ENCODE measurements at regions of chrX and their contacts with region 1.

Region 1: DNA sequence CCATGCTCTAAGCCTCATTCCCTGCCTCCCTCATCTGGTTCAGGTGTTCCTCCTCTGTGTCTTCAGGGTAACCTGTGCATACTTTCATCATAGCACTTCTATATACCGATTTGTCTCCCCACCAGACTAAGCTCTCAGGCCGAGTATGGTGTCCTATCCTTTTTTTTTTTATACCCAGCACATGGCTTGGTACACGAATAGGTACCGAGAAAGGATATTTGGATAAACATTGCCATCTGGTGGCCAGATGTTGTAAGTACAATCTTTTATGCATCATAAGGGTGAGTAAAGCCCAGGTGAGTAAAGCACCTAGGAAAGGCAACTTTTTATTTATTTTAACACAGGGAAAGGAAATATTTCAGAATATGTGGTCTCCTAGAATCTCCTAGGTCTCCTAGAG is 68.4 kb downstream of the MID2 start:
- DNase-seq: peak in 1 of 2 donors; percentile 5
- ATAC-seq: peak in 5 of 8 donors; percentile 46 to 71 (median 52)
- H3K4me3 ChIP-seq: no peak overlapping the region
- H3K27ac ChIP-seq: no peak overlapping the region
- H3K4me1 ChIP-seq: no peaks in the 10 kb centered on the region
- H3K27me3 ChIP-seq: peaks cover 0 to 22% (median 0%) of the 10 kb centered on the region in 7 donors
- CTCF ChIP-seq: peak; percentile 26 to 68 (median 62)

Region 2: GRCh38 chrX:106894392-106894909 is 999.6 kb before region 1 on chrX:
- intact Hi-C with region 1: loop called in 1 of 10 experiments (anchors 10 kb)
- DNase-seq: peak; percentile 13 to 21
- ATAC-seq: peak; percentile 42 to 89 (median 80)
- H3K4me3 ChIP-seq: no peak overlapping the region
- H3K27ac ChIP-seq: no peak overlapping the region
- H3K4me1 ChIP-seq: peaks cover 0 to 5% (median 0%) of the 10 kb centered on the region in 9 donors
- H3K27me3 ChIP-seq: peaks cover 0 to 55% (median 0%) of the 10 kb centered on the region in 7 donors
- CTCF ChIP-seq: peak; percentile 48 to 89 (median 72)

Region 3: GRCh38 chrX:107537815-107538214 is 356.2 kb before region 1 on chrX:
- intact Hi-C with region 1: loop called in 1 of 10 experiments (anchors 10 kb)
- DNase-seq: peak in 1 of 2 donors; percentile 10
- ATAC-seq: no peak
- H3K4me3 ChIP-seq: no peak overlapping the region
- H3K27ac ChIP-seq: no peak overlapping the region
- H3K4me1 ChIP-seq: no peaks in the 10 kb centered on the region
- H3K27me3 ChIP-seq: peaks cover 0 to 52% (median 0%) of the 10 kb centered on the region in 7 donors
- CTCF ChIP-seq: peak in 7 of 9 donors; percentile 35 to 57 (median 39)

Region 4: DNA sequence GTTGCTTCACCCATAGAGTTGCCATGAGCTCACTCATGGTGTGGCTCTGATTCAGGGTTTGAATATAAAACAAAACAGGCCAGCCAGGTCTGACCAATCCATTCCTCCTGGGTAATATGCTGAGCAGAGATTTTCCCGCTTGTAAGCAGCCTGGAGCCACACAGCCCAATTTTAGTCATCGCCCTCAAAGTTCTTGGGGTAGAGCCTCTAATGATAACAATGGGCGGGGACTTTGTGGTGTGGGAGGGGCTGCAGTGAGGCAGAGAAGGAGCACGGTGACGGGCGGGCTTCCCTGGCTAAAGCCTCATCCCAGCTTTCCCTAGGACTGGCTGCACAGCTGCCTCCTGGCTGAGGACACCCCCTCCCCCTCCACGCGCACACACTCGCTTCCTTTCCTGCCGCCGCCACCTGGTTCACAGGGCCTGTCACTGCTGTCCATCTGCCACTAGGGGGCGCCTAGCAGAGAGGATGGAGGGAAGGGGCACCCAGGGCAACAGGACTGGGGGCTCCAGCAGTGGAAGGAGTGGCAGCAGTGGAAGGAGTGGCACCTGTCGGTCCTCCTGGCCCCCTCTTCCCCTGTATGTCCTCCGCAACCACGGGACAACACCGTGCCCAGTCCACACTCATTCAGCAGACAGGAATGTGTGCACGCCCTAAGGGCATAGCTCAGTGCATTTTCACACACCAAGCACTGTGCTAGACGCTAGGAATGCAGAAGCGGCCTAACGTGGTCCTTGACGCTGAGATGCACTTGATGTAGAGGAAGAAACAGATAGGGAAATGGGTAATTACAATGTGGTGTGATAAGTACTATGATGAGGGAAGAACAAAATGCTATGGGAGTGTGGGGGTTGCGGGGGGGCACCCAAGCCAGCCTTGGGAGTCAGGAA is 238.9 kb before region 1 on chrX:
- intact Hi-C with region 1: loop called in 9 of 10 experiments (anchors 5 to 10 kb)
- DNase-seq: peak; percentile 50 to 53
- ATAC-seq: peak; percentile 66 to 91 (median 80)
- H3K4me3 ChIP-seq: peak overlapping the region in 1 of 10 donors; percentile 18
- H3K27ac ChIP-seq: peak overlapping the region in 3 of 10 donors; percentile 6 to 41 (median 15)
- H3K4me1 ChIP-seq: peaks cover 0 to 20% (median 0%) of the 10 kb centered on the region in 9 donors
- H3K27me3 ChIP-seq: peaks cover 0 to 30% (median 0%) of the 10 kb centered on the region in 7 donors
- CTCF ChIP-seq: peak; percentile 18 to 79 (median 66)

Region 5: DNA sequence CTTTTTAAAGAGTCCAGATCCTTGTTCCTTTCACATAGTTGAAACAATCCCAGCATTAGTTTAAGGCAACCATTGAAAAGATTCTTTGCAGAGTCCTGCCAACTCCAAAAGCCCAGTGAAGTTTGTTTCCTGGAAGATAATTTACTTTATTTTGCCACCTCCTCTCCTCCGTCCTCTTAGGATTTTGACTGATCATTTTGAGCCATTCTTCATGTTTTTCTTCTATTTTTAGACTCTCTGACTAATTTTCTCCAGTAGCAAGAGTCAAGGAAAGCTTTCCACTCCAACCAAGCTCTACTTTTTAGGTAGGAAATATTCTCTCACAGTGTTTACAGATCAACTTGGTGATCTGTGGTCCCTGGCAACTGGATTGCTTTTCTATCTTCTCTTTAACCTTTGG is 106.2 kb before region 1 on chrX:
- intact Hi-C with region 1: loop called in 1 of 10 experiments (anchors 10 kb)
- DNase-seq: no peak
- ATAC-seq: peak in 1 of 8 donors; percentile 16
- H3K4me3 ChIP-seq: no peak overlapping the region
- H3K27ac ChIP-seq: no peak overlapping the region
- H3K4me1 ChIP-seq: peaks cover 0 to 5% (median 0%) of the 10 kb centered on the region in 9 donors
- H3K27me3 ChIP-seq: peaks cover 0 to 68% (median 0%) of the 10 kb centered on the region in 7 donors
- CTCF ChIP-seq: no peak

Region 6: DNA sequence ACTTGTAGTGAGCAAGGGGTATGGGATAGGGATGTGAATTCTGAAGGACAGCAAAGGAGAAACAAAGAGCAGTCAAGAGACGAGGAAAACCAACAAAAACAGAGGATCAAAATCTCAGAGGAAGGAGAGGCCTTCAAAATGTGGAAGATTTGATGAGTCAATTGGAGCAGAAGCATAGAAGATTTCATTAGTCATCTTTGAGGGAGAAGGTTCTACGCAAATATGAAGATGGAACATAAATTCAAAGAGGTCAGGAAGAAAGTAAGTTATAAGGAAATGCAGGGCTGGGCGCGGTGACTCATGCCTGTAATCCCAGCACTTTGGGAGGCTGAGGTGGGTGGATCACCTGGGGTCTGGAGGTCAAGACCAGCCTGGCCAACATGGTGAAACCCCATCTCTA is 33.0 kb before region 1 on chrX:
- intact Hi-C with region 1: no loop called
- DNase-seq: no peak
- ATAC-seq: no peak
- H3K4me3 ChIP-seq: no peak overlapping the region
- H3K27ac ChIP-seq: no peak overlapping the region
- H3K4me1 ChIP-seq: no peaks in the 10 kb centered on the region
- H3K27me3 ChIP-seq: peaks cover 0 to 70% (median 0%) of the 10 kb centered on the region in 7 donors
- CTCF ChIP-seq: no peak

Region 7: GRCh38 chrX:107924136-107924746 is 30.2 kb after region 1 on chrX:
- intact Hi-C with region 1: loop called in 1 of 10 experiments (anchors 1 kb)
- DNase-seq: no peak
- ATAC-seq: no peak
- H3K4me3 ChIP-seq: no peak overlapping the region
- H3K27ac ChIP-seq: no peak overlapping the region
- H3K4me1 ChIP-seq: no peaks in the 10 kb centered on the region
- H3K27me3 ChIP-seq: peaks cover 0 to 56% (median 0%) of the 10 kb centered on the region in 7 donors
- CTCF ChIP-seq: no peak

Region 8: GRCh38 chrX:108224727-108225621 is 330.9 kb after region 1 on chrX:
- intact Hi-C with region 1: no loop called
- DNase-seq: no peak
- ATAC-seq: peak in 7 of 8 donors; percentile 16 to 69 (median 58)
- H3K4me3 ChIP-seq: no peak overlapping the region
- H3K27ac ChIP-seq: no peak overlapping the region
- H3K4me1 ChIP-seq: peaks cover 0 to 11% (median 0%) of the 10 kb centered on the region in 9 donors
- H3K27me3 ChIP-seq: peaks cover 0 to 48% (median 0%) of the 10 kb centered on the region in 7 donors
- CTCF ChIP-seq: peak in 8 of 9 donors; percentile 17 to 63 (median 56)